Heart right ventricle (tissue), 16 donors: ENCODE measurements at regions of chr17 and their contacts with region 1.

Region 1: GRCh38 chr17:50638851-50639767 is 4.4 kb downstream of the ABCC3 start:
- DNase-seq: peak; percentile 82 to 90
- ATAC-seq: peak; percentile 66 to 90 (median 86)
- H3K4me3 ChIP-seq: no peak overlapping the region
- H3K27ac ChIP-seq: peak overlapping the region in 3 of 10 donors; percentile 13 to 75 (median 23)
- H3K4me1 ChIP-seq: peaks cover 8 to 60% (median 28%) of the 10 kb centered on the region in 9 donors
- H3K27me3 ChIP-seq: peaks cover 12 to 32% (median 28%) of the 10 kb centered on the region in 7 donors
- CTCF ChIP-seq: no peak

Region 2: GRCh38 chr17:50672831-50673601 is 33.9 kb after region 1 on chr17:
- intact Hi-C with region 1: loop called in 4 of 10 experiments (anchors 2 to 5 kb)
- DNase-seq: peak in 1 of 2 donors; percentile 49
- ATAC-seq: peak; percentile 57 to 96 (median 86)
- H3K4me3 ChIP-seq: no peak overlapping the region
- H3K27ac ChIP-seq: peak overlapping the region in 2 of 10 donors; percentile 25 to 26
- H3K4me1 ChIP-seq: peaks cover 0 to 5% (median 0%) of the 10 kb centered on the region in 9 donors
- H3K27me3 ChIP-seq: no peaks in the 10 kb centered on the region
- CTCF ChIP-seq: no peak

Region 3: DNA sequence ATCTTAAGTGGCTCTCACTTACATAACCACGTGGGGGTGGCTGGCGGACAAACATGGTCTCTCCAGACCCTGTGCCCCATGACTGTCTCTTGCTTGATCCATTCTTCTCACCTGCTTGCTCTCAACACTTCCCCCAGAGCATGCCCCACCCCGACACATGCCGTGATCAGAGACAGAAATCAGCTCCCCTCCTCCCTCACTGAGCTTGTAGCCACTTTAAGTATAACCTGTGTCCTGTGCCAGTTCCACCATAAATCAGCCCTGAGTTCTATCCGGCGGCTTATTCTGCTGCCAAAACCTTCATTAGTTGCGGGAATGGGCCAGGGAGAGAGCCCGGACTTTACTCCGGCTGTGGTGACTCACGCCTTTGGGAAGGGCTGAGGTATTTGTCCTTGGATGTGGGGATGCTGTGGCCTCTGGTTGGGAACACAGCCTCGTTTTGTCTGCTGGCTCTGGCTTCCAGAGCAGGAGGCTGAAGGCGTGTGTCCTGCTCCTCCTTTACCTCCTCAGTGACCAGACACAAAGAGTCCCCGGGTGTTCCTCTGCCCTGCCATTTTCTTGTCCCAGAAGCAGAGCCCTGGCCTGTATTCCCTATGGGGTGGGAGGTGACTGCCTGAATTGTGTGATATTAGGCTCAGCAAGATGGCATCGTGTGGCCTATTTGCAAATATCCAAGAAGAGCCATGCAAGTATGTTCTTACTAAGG is 47.5 kb after region 1 on chr17:
- intact Hi-C with region 1: loop called in 6 of 10 experiments (anchors 2 to 5 kb)
- DNase-seq: peak in 1 of 2 donors; percentile 34
- ATAC-seq: peak; percentile 21 to 91 (median 77)
- H3K4me3 ChIP-seq: no peak overlapping the region
- H3K27ac ChIP-seq: peak overlapping the region in 7 of 10 donors; percentile 39 to 65 (median 56)
- H3K4me1 ChIP-seq: peaks cover 2 to 36% (median 13%) of the 10 kb centered on the region in 9 donors
- H3K27me3 ChIP-seq: no peaks in the 10 kb centered on the region
- CTCF ChIP-seq: no peak

Region 4: DNA sequence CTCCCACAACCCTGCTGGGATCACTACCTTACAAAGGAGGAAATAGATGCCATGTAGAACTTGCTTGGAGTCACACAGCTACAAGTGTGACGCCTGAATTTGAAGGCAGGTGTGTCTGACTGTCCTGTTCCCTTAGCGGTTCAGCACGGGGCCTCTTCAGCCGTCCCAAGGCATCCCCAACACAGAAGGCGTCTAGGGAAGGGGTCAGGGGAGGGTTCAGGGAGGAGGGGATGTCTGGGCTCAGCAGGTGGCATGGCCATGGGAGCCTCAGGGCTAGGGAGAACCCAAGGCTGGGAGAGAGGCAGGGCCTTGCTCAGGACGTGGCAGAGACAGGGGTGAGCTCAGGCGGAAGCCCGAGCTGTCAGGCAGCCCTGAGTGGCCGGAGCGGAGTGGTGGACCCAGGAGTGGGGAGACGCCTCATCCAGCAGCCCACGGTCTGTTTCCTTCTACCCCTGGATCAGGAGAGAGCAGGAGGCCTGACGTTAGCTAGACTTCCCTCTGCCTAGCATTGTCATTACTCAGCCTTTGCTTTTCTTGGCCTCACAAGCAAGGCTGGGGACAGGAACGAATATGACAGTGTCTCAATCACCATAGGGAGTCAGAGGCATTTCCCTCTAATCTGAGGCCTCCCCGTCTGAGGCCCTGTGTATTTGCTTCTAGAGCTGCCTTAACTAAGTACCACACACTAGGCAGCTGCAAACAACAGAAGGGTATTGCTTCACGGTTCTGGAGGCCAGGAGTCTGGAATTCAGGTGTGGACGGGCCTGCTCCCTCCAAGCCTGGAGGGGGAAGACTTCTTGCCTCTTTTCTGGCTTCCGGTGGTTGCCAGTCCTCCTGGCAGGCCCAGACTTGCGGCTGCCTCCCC is 159.5 kb after region 1 on chr17:
- intact Hi-C with region 1: no loop called
- DNase-seq: no peak
- ATAC-seq: peak in 2 of 8 donors; percentile 26 to 39
- H3K4me3 ChIP-seq: no peak overlapping the region
- H3K27ac ChIP-seq: no peak overlapping the region
- H3K4me1 ChIP-seq: peaks cover 0 to 16% (median 4%) of the 10 kb centered on the region in 9 donors
- H3K27me3 ChIP-seq: no peaks in the 10 kb centered on the region
- CTCF ChIP-seq: no peak